Testis (tissue), 5 donors: ENCODE measurements at regions of chr10 and their contacts with region 1.

Region 1: GRCh38 chr10:102835007-102835482 is 2.2 kb downstream of the CYP17A1 start:
- DNase-seq: peak; percentile 87
- H3K4me3 ChIP-seq: no peak overlapping the region
- H3K27ac ChIP-seq: no peak overlapping the region
- H3K4me1 ChIP-seq: peaks cover 8% of the 10 kb centered on the region
- H3K27me3 ChIP-seq: no peaks in the 10 kb centered on the region
- CTCF ChIP-seq: peak; percentile 77 to 82 (median 77)
- POLR2A ChIP-seq: no peak

Region 2: DNA sequence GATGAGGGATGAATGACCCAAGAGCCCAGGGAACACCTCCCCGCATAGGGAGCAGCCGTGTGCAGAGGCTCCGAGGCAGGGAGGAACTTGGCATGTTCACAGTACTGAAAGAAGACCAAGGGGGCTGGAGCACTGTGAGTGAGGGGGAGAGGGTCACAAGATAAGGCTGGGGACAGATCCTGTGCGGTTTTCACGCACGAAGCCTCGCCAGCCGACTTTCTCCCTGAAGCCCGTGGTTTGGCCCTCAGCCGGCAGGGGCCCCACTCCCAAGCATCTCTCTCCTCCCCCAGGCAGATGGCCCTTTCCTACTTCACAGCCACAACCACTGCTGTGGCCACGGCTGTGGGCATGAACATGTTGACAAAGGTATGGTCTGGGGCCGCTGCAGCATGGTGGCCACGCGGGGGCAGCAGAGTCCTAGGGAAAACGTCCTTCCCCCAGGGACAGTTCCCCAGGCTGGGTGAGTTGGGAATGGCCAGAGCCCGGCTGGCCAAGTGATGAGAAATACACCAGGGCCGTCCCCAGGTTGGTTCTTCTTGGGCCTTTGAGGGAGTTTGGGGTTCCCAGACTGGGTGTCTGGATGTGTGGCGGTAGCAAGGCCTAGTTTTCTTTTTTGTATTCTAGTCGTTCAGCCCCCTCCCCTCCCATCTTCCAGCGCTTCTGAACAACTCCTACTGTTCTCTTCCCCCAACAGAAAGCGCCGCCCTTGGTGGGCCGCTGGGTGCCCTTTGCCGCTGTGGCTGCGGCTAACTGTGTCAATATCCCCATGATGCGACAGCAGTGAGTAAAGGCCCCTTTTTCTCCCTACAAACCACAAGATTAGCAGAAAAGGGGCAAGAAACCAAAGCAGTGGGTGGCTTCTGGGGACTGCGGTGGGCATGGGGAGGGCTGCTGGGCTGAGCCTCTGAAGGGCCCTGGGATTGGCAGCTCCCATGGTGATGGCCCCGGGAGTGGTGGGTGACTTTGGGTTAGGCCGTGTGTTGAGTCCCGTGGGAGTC is 105.7 kb before region 1 on chr10:
- intact Hi-C with region 1: no loop called
- DNase-seq: peak; percentile 91
- H3K4me3 ChIP-seq: no peak overlapping the region
- H3K27ac ChIP-seq: no peak overlapping the region
- H3K4me1 ChIP-seq: no peaks in the 10 kb centered on the region
- H3K27me3 ChIP-seq: no peaks in the 10 kb centered on the region
- CTCF ChIP-seq: peak; percentile 85 to 89 (median 85)
- POLR2A ChIP-seq: no peak

Region 3: GRCh38 chr10:102904346-102904745 is 69.3 kb after region 1 on chr10:
- intact Hi-C with region 1: loop called (anchors 10 kb)
- DNase-seq: no peak
- H3K4me3 ChIP-seq: no peak overlapping the region
- H3K27ac ChIP-seq: no peak overlapping the region
- H3K4me1 ChIP-seq: no peaks in the 10 kb centered on the region
- H3K27me3 ChIP-seq: no peaks in the 10 kb centered on the region
- CTCF ChIP-seq: no peak
- POLR2A ChIP-seq: no peak

Region 4: DNA sequence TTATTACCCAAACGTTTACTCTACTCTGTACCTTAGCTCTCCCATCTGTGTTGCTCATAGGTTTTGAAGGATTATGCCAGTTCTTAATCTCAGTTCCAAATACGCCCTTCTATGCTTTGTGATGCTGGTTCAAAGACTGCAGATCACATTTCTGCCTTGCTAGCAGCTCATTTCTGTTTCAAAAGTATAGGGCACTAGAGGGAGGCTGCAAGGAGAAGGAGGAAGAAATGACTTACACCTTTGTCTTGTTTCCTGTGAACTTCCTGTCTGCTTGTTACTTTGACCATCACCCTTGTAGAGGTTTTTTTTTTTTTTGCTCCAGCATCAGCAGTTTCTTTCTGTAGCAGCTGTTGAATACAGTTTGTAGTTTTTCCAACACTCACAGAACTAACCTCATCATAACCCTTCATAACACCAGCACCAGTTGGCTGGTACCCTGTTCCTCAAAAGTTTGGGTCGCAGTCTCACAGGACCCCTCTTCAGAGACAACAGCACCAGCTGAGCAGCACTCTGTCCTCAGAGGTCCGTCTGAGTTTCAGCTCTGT is 1148.4 kb after region 1 on chr10:
- intact Hi-C with region 1: no loop called
- DNase-seq: no peak
- H3K4me3 ChIP-seq: no peak overlapping the region
- H3K27ac ChIP-seq: no peak overlapping the region
- H3K4me1 ChIP-seq: no peaks in the 10 kb centered on the region
- H3K27me3 ChIP-seq: no peaks in the 10 kb centered on the region
- CTCF ChIP-seq: no peak
- POLR2A ChIP-seq: no peak